Right ventricle myocardium inferior (tissue), 1 donor: ENCODE measurements at regions of chr12 and their contacts with region 1.

Region 1: GRCh38 chr12:98490501-98491453 is 24.6 kb upstream of the TMPO start:
- DNase-seq: peak; percentile 90
- ATAC-seq: peak; percentile 81

Region 2: GRCh38 chr12:98424726-98425401 is 65.9 kb before region 1 on chr12:
- intact Hi-C with region 1: loop called (anchors 5 kb)
- DNase-seq: no peak
- ATAC-seq: peak; percentile 63

Region 3: DNA sequence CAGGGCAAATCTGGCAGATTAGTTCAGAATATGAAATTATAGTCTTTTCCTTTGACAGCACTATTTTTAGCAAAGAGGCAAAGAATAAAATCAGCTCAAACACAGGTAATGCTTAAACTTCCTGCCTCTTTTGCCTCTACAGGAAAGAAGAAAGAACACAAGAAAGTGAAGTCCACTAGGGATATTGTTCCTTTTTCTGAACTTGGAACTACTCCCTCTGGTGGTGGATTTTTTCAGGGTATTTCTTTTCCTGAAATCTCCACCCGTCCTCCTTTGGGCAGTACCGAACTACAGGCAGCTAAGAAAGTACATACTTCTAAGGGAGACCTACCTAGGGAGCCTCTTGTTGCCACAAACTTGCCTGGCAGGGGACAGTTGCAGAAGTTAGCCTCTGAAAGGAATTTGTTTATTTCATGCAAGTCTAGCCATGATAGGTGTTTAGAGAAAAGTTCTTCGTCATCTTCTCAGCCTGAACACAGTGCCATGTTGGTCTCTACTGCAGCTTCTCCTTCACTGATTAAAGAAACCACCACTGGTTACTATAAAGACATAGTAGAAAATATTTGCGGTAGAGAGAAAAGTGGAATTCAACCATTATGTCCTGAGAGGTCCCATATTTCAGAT is 42.0 kb after region 1 on chr12:
- intact Hi-C with region 1: loop called (anchors 5 kb)
- DNase-seq: no peak
- ATAC-seq: no peak